ENCODE measurements at regions of chr2 and their contacts with region 1.

Region 1: GRCh38 chr2:135004005-135004746 is 43.1 kb downstream of the MAP3K19 start:
- DNase-seq: peak; percentile 75
- ATAC-seq: peak; percentile 99
- H3K4me3 Mint-ChIP-seq: no peak overlapping the region
- H3K27ac Mint-ChIP-seq: no peak overlapping the region
- H3K4me1 Mint-ChIP-seq: peaks cover 5% of the 10 kb centered on the region
- H3K27me3 Mint-ChIP-seq: peaks cover 30% of the 10 kb centered on the region

Region 2: DNA sequence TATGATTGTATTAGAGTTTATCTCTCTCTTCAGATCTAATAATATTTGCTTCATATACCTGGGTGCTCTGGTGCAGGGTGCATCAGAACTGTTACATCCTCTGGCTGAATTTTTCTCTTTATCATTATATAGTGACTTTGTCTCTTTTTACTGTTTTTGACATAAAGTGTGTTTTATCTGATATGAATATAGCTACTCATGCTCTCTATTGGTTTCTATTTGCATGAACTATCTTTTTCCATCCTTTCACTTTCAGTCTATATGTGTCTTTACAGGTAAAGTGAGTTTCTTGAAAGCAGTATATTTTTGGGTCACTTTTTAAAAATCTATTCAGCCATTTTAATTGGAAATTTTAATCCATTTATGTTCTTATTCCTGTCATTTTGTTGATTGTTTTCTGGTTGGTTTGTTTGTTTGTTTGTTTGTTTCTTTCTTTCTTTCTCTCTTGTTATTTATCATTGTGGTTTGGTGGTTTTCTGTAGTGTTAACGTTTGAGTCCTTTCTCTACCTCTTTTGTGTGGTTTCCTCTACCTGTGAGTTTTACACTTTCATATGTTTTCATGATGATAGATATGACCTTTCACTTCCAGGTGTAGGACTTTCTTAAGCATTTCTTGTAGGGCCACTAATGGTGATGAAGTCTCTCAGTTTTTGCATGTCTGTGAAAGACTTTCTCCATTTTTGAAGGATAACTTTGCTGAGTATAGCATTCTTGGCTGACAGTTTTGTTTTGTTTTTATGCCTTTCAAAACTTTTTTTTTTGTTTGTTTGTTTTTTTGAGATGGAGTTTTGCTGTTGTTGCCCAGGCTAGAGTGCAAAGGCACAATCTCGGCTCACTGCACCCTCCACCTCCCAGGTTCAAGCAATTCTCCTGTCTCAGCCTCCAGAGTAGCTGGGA is 30.7 kb before region 1 on chr2:
- CTCF ChIA-PET with region 1: no interaction called
- DNase-seq: no peak
- ATAC-seq: no peak
- H3K4me3 Mint-ChIP-seq: no peak overlapping the region
- H3K27ac Mint-ChIP-seq: peak overlapping the region; percentile 23
- H3K4me1 Mint-ChIP-seq: peaks cover 6% of the 10 kb centered on the region
- H3K27me3 Mint-ChIP-seq: no peaks in the 10 kb centered on the region

Region 3: DNA sequence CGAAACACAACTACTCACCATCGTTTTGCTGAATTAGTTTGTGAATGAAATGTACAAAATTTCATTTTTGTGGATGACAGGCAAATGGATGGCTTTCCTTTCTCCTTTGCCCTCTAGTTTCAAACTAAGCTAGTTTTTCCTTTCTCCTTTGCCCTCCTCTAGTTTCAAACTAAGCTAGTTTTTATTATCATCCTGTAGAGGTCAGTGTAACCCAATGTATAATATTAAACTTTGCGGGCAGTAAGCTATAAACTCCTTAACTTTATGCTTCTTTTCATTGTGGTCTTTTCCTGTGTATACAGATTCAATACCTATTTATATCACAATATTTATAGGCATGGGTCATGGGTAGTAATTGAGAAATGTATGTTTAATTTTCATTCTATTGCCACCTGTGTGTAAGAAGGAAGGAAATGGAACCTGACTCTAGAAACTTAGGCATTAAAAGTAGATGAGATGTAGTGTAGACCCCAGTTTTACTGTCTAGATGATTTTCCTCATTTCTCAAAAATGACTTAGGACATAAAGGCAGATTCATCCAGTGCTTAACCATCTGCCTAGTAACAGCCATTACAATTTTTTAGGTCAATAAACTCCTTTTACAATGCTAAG is 15.1 kb before region 1 on chr2:
- CTCF ChIA-PET with region 1: interaction called, 11 read pairs
- DNase-seq: no peak
- ATAC-seq: no peak
- H3K4me3 Mint-ChIP-seq: no peak overlapping the region
- H3K27ac Mint-ChIP-seq: no peak overlapping the region
- H3K4me1 Mint-ChIP-seq: no peaks in the 10 kb centered on the region
- H3K27me3 Mint-ChIP-seq: peaks cover 25% of the 10 kb centered on the region

Region 4: DNA sequence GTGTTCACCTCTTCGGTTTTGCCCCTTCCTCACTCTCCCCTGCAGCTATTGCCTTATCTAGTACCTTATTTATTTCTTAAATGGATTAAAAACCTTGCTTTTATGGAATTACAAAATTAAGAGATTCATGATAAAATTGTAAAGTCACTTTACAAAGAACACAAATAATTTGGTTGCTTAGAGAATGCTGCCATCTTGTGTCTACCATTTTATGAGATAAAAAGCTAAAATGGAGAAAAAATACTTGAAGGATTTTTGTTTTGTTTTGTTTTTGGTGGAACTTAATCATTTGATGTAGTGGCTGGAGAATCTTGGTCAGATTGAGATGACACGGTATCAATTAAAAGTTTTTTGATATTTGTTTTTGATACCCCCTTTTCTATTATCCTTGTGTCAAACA is 596.7 kb after region 1 on chr2:
- CTCF ChIA-PET with region 1: interaction called, 20 read pairs
- DNase-seq: no peak
- ATAC-seq: no peak
- H3K4me3 Mint-ChIP-seq: no peak overlapping the region
- H3K27ac Mint-ChIP-seq: no peak overlapping the region
- H3K4me1 Mint-ChIP-seq: no peaks in the 10 kb centered on the region
- H3K27me3 Mint-ChIP-seq: no peaks in the 10 kb centered on the region

Measured in activated CD8-positive, alpha-beta memory T cell treated with anti-CD3 and anti-CD28 coated beads, Interleukin-2, amount 10 ng/mL, durations not matched to agents 7 days and 5 days (primary cell).